ENCODE measurements at regions of chr20 and their contacts with region 1.

Region 1: DNA sequence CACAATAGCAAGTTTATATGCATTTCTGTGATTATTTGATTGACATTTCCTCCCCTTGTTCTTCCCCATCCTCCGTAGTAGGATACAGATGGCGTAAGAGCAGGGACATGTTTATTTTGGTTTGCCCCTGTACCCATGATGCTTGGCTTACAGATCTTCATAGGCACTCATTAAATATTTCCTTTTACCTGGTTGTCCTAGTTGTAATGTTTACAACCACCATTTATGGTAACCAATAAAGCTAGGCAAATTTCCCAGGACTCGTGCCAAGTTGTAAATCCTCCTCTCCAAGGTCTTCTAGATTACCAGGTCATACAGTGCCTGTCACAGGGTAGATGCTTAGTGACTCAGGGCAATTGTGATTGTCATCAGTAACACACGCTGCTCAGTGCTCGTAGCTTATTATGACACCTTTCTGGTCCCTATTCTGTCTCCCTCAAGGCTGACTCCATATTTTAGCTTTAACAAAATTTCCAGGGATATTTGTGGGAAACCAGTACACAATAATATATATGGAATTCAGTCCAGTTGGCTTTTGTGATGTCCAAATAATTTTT is 24.8 kb downstream of the CYP24A1 start:
- DNase-seq: peak; percentile 88 to 99
- ATAC-seq: peak; percentile 52 to 67
- H3K4me3 ChIP-seq: no peak overlapping the region
- H3K27ac ChIP-seq: peak overlapping the region; percentile 86 to 93
- H3K4me1 ChIP-seq: peaks cover 80% of the 10 kb centered on the region
- CTCF ChIP-seq: no peak
- EP300 ChIP-seq: peak; percentile 80 to 89; a peak in 4 of 5 replicates
- POLR2A ChIP-seq: no peak
- RAD21 ChIP-seq: peak in 1 of 2 experiments; percentile 43; a peak in 2 of 5 replicates

Region 2: GRCh38 chr20:53668992-53669391 is 480.0 kb before region 1 on chr20:
- CTCF ChIA-PET with region 1: no interaction called
- POLR2A ChIA-PET with region 1: no interaction called
- DNase-seq: no peak
- ATAC-seq: no peak
- H3K4me3 ChIP-seq: no peak overlapping the region
- H3K27ac ChIP-seq: peak overlapping the region in 1 of 2 experiments; percentile 34; a peak in 1 of 6 replicates
- H3K4me1 ChIP-seq: peaks cover 5% of the 10 kb centered on the region; the same call in 1 of the 3 replicates
- CTCF ChIP-seq: no peak
- EP300 ChIP-seq: no peak
- POLR2A ChIP-seq: no peak
- RAD21 ChIP-seq: no peak

Region 3: DNA sequence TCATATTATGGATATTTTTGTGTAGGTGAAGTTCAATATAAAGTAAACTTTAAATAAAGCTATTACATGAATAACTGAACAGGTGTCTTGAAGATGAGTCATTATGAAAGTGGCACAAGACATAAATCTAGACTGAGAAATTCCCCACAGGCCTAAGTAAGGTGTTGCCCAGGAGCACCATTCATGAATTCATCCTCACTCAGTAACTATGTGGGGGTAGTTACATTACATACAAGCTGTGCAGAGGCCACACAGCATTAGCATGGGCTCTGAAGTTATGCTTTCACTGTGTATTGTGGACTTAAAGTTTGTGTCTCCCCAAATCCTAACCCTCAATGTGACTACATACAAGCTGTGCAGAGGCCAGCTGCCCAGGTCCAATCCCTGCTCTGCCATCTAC is 144.6 kb before region 1 on chr20:
- CTCF ChIA-PET with region 1: no interaction called
- POLR2A ChIA-PET with region 1: no interaction called
- DNase-seq: no peak
- ATAC-seq: no peak
- H3K4me3 ChIP-seq: no peak overlapping the region
- H3K27ac ChIP-seq: no peak overlapping the region
- H3K4me1 ChIP-seq: no peaks in the 10 kb centered on the region
- CTCF ChIP-seq: no peak
- EP300 ChIP-seq: no peak
- POLR2A ChIP-seq: no peak
- RAD21 ChIP-seq: no peak

Region 4: GRCh38 chr20:54115151-54115854 is 33.7 kb before region 1 on chr20:
- CTCF ChIA-PET with region 1: interaction called, 4 read pairs
- POLR2A ChIA-PET with region 1: interaction called, 21 read pairs
- DNase-seq: peak; percentile 77 to 92
- ATAC-seq: peak; percentile 84 to 88
- H3K4me3 ChIP-seq: no peak overlapping the region
- H3K27ac ChIP-seq: peak overlapping the region; percentile 94 to 98
- H3K4me1 ChIP-seq: peaks cover 76% of the 10 kb centered on the region
- CTCF ChIP-seq: no peak
- EP300 ChIP-seq: no peak
- POLR2A ChIP-seq: no peak
- RAD21 ChIP-seq: no peak

Region 5: GRCh38 chr20:54123587-54124180 is 25.3 kb before region 1 on chr20:
- CTCF ChIA-PET with region 1: interaction called, 5 read pairs
- POLR2A ChIA-PET with region 1: interaction called, 34 read pairs
- DNase-seq: peak; percentile 93 to 100
- ATAC-seq: peak; percentile 95 to 98
- H3K4me3 ChIP-seq: no peak overlapping the region
- H3K27ac ChIP-seq: peak overlapping the region; percentile 96 to 98
- H3K4me1 ChIP-seq: peaks cover 86% of the 10 kb centered on the region
- CTCF ChIP-seq: no peak
- EP300 ChIP-seq: peak; percentile 100
- POLR2A ChIP-seq: no peak
- RAD21 ChIP-seq: peak; percentile 44 to 60

Region 6: GRCh38 chr20:54132612-54133433 is 16.2 kb before region 1 on chr20:
- CTCF ChIA-PET with region 1: interaction called, 15 read pairs
- POLR2A ChIA-PET with region 1: interaction called, 65 read pairs
- DNase-seq: peak; percentile 70 to 96
- ATAC-seq: peak; percentile 83 to 93
- H3K4me3 ChIP-seq: no peak overlapping the region
- H3K27ac ChIP-seq: peak overlapping the region; percentile 87 to 96
- H3K4me1 ChIP-seq: peaks cover 49% of the 10 kb centered on the region
- CTCF ChIP-seq: no peak
- EP300 ChIP-seq: peak; percentile 98
- POLR2A ChIP-seq: no peak
- RAD21 ChIP-seq: peak in 1 of 2 experiments; percentile 47; a peak in 4 of 5 replicates

Region 7: DNA sequence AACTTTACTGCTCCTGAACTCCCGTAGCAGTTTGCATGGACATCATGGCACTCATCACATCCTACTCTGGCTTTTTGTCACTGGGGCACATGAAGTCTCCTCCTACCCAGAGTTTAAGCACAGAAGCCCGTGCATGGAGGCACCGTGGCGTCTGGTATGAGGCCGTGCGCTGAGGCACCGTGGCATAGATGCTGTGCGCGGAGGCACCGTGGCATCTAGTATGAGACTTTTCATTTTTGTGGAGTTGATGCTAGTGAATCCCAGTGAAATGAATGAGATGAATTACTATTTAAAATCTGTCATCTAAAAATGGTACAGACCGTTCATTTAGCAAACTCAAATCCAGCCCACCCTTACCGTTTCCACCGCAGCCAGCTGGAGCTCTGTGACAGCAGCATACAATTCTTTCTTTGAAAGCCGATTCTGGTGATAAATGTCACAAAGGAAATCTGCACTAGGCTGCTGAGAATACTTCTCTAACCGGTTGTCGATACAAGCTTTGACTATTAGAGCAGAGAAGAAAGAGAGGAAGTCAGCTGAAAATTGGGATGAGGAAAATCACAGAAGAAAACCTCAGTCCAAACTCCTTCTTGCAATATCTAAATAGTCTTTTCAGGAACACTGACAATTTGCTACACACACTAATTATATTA is 13.5 kb after region 1 on chr20:
- CTCF ChIA-PET with region 1: interaction called, 10 read pairs
- POLR2A ChIA-PET with region 1: interaction called, 42 read pairs
- DNase-seq: peak in 1 of 2 experiments; percentile 47
- ATAC-seq: peak in 1 of 2 experiments; percentile 0; a peak in 3 of 6 replicates
- H3K4me3 ChIP-seq: peak overlapping the region; percentile 20
- H3K27ac ChIP-seq: peak overlapping the region; percentile 93 to 100
- H3K4me1 ChIP-seq: peaks cover 100% of the 10 kb centered on the region
- CTCF ChIP-seq: no peak
- EP300 ChIP-seq: no peak
- POLR2A ChIP-seq: no peak
- RAD21 ChIP-seq: no peak

Region 8: GRCh38 chr20:54167909-54168872 is 19.2 kb after region 1 on chr20:
- CTCF ChIA-PET with region 1: interaction called, 4 read pairs
- POLR2A ChIA-PET with region 1: interaction called, 42 read pairs
- DNase-seq: peak; percentile 57 to 92
- ATAC-seq: peak; percentile 40 to 75
- H3K4me3 ChIP-seq: peak overlapping the region; percentile 83
- H3K27ac ChIP-seq: peak overlapping the region; percentile 93 to 100
- H3K4me1 ChIP-seq: peaks cover 55% of the 10 kb centered on the region
- CTCF ChIP-seq: no peak
- EP300 ChIP-seq: no peak
- POLR2A ChIP-seq: peak; percentile 21; the same call in 1 of the 2 replicates
- RAD21 ChIP-seq: no peak

Region 9: GRCh38 chr20:54173653-54174456 is 24.8 kb after region 1 on chr20 and contains the start of gene CYP24A1:
- CTCF ChIA-PET with region 1: interaction called, 4 read pairs
- POLR2A ChIA-PET with region 1: interaction called, 42 read pairs
- DNase-seq: peak; percentile 97 to 98
- ATAC-seq: peak; percentile 87
- H3K4me3 ChIP-seq: peak within 1 kb of the TSS; percentile 83
- H3K27ac ChIP-seq: peak within 1 kb of the TSS; percentile 93 to 100
- H3K4me1 ChIP-seq: peaks cover 43% of the 10 kb centered on the region
- CTCF ChIP-seq: no peak
- EP300 ChIP-seq: peak; percentile 92; a peak in 4 of 5 replicates
- POLR2A ChIP-seq: peak; percentile 100
- RAD21 ChIP-seq: no peak
- polyA plus RNA-seq, gene CYP24A1: 1,617 and 1,630 TPM in 2 replicates

Region 10: DNA sequence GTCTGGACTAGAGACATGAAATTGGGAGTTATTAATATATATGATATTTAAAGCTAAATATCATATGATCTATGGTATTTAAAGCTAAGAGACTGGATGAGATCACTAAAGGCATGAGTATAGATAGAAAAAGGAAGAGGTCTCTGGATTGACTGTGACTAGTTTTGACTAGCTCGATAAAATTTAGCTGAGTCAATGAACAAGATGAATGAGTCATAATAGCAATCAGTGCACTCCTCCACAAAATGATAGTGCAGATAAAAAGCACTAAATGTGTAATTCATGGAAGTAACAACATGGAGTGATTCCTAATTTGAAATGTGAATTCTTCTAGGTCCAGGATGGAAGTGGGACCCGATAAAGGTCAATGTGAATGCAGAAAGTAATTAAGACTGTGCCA is 186.3 kb after region 1 on chr20:
- CTCF ChIA-PET with region 1: no interaction called
- POLR2A ChIA-PET with region 1: no interaction called
- DNase-seq: no peak
- ATAC-seq: no peak
- H3K4me3 ChIP-seq: no peak overlapping the region
- H3K27ac ChIP-seq: no peak overlapping the region
- H3K4me1 ChIP-seq: peaks cover 5% of the 10 kb centered on the region
- CTCF ChIP-seq: no peak
- EP300 ChIP-seq: no peak
- POLR2A ChIP-seq: no peak
- RAD21 ChIP-seq: no peak